Panc1 (cell line): ENCODE measurements at regions of chr5 and their contacts with region 1.

Region 1: DNA sequence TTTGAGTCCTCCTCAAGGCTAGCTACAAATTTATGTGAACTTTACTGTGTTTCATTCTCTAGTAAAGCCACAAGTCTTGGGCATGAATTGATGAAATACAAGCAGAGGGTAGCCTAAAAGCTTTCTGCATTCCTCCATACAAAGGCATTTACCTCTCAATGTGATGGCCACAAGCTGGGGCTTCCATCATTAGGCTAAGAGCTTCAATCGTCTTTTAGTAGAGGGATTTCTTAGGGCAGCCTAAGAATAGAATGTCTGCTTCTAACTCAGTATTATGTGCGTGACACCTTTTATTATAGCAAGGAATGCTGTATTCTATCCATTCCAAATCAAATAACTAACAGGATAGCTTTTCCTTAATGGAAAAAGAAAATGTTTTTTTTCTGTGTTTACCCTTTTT is 3.7 kb downstream of the PLAC8L1 start:
- DNase-seq: no peak
- ATAC-seq: no peak
- H3K4me3 ChIP-seq: no peak overlapping the region
- H3K27ac ChIP-seq: no peak overlapping the region
- H3K4me1 ChIP-seq: no peaks in the 10 kb centered on the region
- H3K27me3 ChIP-seq: no peaks in the 10 kb centered on the region
- CTCF ChIP-seq: no peak

Region 2: DNA sequence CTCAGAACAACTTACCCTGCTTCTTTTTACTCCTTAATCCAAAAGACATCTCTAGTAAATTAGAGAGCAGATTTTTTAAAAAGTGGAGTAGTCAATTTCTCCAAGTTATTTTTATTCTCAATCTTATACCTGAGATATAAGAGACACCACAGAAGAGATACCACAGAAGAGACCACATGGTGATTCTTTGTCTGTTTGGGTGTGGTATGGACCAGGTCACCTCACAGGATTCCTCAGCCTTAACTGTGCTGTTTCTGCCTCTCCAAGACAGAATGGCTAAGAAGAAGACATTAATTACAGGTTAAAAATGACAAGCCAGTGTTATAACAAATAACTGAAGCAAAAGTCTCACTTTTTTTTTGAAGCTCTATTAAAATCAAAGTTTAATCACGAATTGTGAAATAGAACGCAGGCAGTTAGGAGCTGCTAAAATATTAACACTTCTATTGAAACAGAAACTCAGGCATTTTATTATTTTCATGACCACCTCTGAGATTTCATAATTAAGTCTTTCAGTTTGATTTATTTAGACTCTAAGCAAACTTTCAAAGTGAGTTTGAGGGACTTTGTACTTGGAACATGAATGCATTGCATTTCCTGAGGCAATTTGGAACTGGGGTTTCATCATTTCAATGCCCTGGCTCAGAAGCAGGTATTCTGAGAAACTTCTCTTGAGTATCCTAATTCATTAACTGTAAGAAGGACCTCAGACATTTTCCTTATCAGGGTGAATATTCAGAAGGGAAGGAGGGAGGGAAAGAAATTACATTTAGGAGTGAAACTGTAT is 1650.3 kb before region 1 on chr5:
- CTCF ChIA-PET with region 1: interaction called, 11 read pairs
- POLR2A ChIA-PET with region 1: no interaction called
- in situ Hi-C with region 1: no loop called
- intact Hi-C with region 1: no loop called
- DNase-seq: no peak
- ATAC-seq: no peak
- H3K4me3 ChIP-seq: no peak overlapping the region
- H3K27ac ChIP-seq: no peak overlapping the region
- H3K4me1 ChIP-seq: no peaks in the 10 kb centered on the region
- H3K27me3 ChIP-seq: no peaks in the 10 kb centered on the region
- CTCF ChIP-seq: no peak

Region 3: GRCh38 chr5:145847499-145848497 is 253.8 kb before region 1 on chr5:
- CTCF ChIA-PET with region 1: no interaction called
- POLR2A ChIA-PET with region 1: interaction called, 12 read pairs
- in situ Hi-C with region 1: no loop called
- intact Hi-C with region 1: no loop called
- DNase-seq: no peak
- ATAC-seq: peak; percentile 56; the same call in 1 of the 2 replicates
- H3K4me3 ChIP-seq: no peak overlapping the region
- H3K27ac ChIP-seq: no peak overlapping the region
- H3K4me1 ChIP-seq: peaks cover 4% of the 10 kb centered on the region; the same call in 1 of the 2 replicates
- H3K27me3 ChIP-seq: no peaks in the 10 kb centered on the region
- CTCF ChIP-seq: no peak